Sigmoid colon (tissue), 7 donors: ENCODE measurements at regions of chr3 and their contacts with region 1.

Region 1: GRCh38 chr3:125967138-125967537 is 1.8 kb upstream of the ROPN1B start:
- DNase-seq: no peak
- H3K4me3 ChIP-seq: no peak overlapping the region
- H3K27ac ChIP-seq: no peak overlapping the region
- H3K4me1 ChIP-seq: peaks cover 0 to 6% (median 3%) of the 10 kb centered on the region in 4 donors
- H3K27me3 ChIP-seq: peaks cover 0 to 4% (median 0%) of the 10 kb centered on the region in 3 donors
- CTCF ChIP-seq: no peak
- EP300 ChIP-seq: no peak
- POLR2A ChIP-seq: no peak

Region 2: DNA sequence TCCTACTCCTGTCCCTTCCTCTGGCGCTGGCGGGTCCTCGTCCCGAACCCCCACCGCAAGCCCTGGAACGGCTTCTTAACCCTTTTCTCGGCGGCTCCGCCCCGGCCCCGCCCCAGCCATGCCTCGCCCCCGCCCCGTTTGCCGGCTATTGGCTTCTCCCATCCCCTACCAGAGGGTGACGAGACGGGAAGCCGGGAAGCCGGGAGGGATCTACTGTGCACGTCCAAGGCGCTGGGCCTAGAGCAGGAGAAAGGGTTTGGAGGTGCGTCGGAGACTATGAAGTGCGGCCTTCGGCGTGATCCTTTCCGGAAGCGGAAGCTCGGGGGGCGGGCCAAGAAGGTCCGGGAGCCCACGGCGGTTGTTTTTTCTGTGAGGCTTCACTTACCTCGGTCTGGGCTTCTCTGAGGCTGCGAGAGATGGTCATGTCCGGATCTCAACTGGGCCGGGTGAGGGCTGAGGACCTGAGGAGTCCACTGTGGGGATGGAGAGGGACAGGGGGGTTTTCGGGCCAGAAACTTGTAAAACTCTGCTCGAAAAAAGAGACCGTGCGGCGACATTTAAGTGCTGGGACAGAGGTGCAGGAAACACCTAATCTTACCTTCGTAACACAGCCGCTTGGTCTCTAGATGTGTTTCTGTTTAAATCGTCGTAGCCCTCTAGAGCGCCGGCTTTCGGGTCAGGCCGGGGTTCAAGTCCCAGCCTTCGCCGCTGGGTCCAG is 23.3 kb after region 1 on chr3:
- intact Hi-C with region 1: loop called (anchors 1 kb)
- DNase-seq: peak; percentile 97
- H3K4me3 ChIP-seq: peak overlapping the region; percentile 51 to 73 (median 65)
- H3K27ac ChIP-seq: peak overlapping the region; percentile 78 to 91 (median 83)
- H3K4me1 ChIP-seq: peaks cover 0 to 16% (median 4%) of the 10 kb centered on the region in 4 donors
- H3K27me3 ChIP-seq: no peaks in the 10 kb centered on the region
- CTCF ChIP-seq: no peak
- EP300 ChIP-seq: no peak
- POLR2A ChIP-seq: no peak